Activated B cell treated with CpG ODN at 0.5 μM for 24 hours (primary cell): ENCODE measurements at regions of chr1 and their contacts with region 1.

Region 1: GRCh38 chr1:226547754-226548191 is 791 bp upstream of the STUM start:
- DNase-seq: peak; percentile 52
- ATAC-seq: peak; percentile 71
- H3K4me3 Mint-ChIP-seq: peak overlapping the region; percentile 28
- H3K27ac Mint-ChIP-seq: no peak overlapping the region
- H3K4me1 Mint-ChIP-seq: peaks cover 21% of the 10 kb centered on the region
- H3K27me3 Mint-ChIP-seq: peaks cover 21% of the 10 kb centered on the region
- CTCF ChIP-seq: peak; percentile 50

Region 2: GRCh38 chr1:226201029-226201593 is 346.7 kb before region 1 on chr1:
- CTCF ChIA-PET with region 1: no interaction called
- POLR2A ChIA-PET with region 1: no interaction called
- intact Hi-C with region 1: loop called (anchors 10 kb)
- DNase-seq: no peak
- ATAC-seq: no peak
- H3K4me3 Mint-ChIP-seq: no peak overlapping the region
- H3K27ac Mint-ChIP-seq: no peak overlapping the region
- H3K4me1 Mint-ChIP-seq: peaks cover 27% of the 10 kb centered on the region
- H3K27me3 Mint-ChIP-seq: peaks cover 2% of the 10 kb centered on the region
- CTCF ChIP-seq: no peak

Region 3: DNA sequence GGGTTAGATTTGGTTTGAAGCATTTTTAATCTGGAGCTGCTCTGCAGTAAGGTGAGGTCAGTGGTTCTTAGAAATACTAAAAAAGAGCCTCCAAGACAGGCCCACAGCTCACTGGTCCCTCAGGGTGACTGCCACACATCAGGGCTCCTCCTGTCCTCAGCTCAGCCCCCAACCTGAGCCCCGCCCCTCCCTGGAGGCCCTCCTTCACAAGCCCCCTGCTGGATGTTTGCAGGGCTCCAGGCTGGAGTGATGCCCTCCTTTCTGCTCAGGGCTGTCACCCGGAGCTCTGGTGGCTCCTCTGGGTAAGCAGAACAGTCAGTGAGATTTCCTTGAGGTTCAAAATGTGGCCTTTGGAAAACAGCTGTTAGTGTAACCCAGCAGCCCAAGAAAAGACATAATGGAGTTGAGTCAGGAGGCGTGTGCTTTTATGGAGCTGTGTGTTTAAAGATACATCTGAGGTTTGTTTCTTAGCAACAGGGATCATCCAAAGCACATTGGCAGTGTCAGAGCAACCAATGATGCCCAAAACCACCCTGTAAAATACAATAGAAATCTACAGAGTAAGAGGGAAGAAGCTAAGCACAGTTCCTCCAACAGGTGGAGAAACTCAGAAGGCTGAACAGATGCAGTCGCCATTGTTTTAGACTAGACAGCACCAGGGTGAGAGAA is 22.2 kb after region 1 on chr1:
- CTCF ChIA-PET with region 1: interaction called, 18 read pairs
- POLR2A ChIA-PET with region 1: no interaction called
- intact Hi-C with region 1: loop called (anchors 2 kb)
- DNase-seq: no peak
- ATAC-seq: peak; percentile 89
- H3K4me3 Mint-ChIP-seq: no peak overlapping the region
- H3K27ac Mint-ChIP-seq: no peak overlapping the region
- H3K4me1 Mint-ChIP-seq: peaks cover 14% of the 10 kb centered on the region
- H3K27me3 Mint-ChIP-seq: no peaks in the 10 kb centered on the region
- CTCF ChIP-seq: no peak

Region 4: GRCh38 chr1:226626577-226626956 is 78.8 kb after region 1 on chr1:
- CTCF ChIA-PET with region 1: interaction called, 6 read pairs
- POLR2A ChIA-PET with region 1: no interaction called
- intact Hi-C with region 1: loop called (anchors 2 kb)
- DNase-seq: peak; percentile 68
- ATAC-seq: peak; percentile 93
- H3K4me3 Mint-ChIP-seq: peak overlapping the region; percentile 55
- H3K27ac Mint-ChIP-seq: peak overlapping the region; percentile 59
- H3K4me1 Mint-ChIP-seq: peaks cover 47% of the 10 kb centered on the region
- H3K27me3 Mint-ChIP-seq: no peaks in the 10 kb centered on the region
- CTCF ChIP-seq: peak; percentile 76

Region 5: GRCh38 chr1:226827968-226828513 is 280.3 kb after region 1 on chr1:
- CTCF ChIA-PET with region 1: interaction called, 6 read pairs
- POLR2A ChIA-PET with region 1: no interaction called
- intact Hi-C with region 1: loop called (anchors 1 kb)
- DNase-seq: peak; percentile 82
- ATAC-seq: peak; percentile 97
- H3K4me3 Mint-ChIP-seq: peak overlapping the region; percentile 58
- H3K27ac Mint-ChIP-seq: peak overlapping the region; percentile 80
- H3K4me1 Mint-ChIP-seq: peaks cover 37% of the 10 kb centered on the region
- H3K27me3 Mint-ChIP-seq: no peaks in the 10 kb centered on the region
- CTCF ChIP-seq: peak; percentile 67

Region 6: GRCh38 chr1:227437495-227438008 is 889.8 kb after region 1 on chr1:
- CTCF ChIA-PET with region 1: no interaction called
- POLR2A ChIA-PET with region 1: no interaction called
- intact Hi-C with region 1: loop called (anchors 1 kb)
- DNase-seq: no peak
- ATAC-seq: no peak
- H3K4me3 Mint-ChIP-seq: no peak overlapping the region
- H3K27ac Mint-ChIP-seq: no peak overlapping the region
- H3K4me1 Mint-ChIP-seq: no peaks in the 10 kb centered on the region
- H3K27me3 Mint-ChIP-seq: peaks cover 33% of the 10 kb centered on the region
- CTCF ChIP-seq: no peak